ENCODE measurements at regions of chr4 and their contacts with region 1.

Region 1: GRCh38 chr4:151362404-151363164 is 37.2 kb upstream of the SH3D19 start:
- DNase-seq: peak; percentile 84 to 92
- H3K4me3 ChIP-seq: no peak overlapping the region
- H3K4me1 ChIP-seq: no peaks in the 10 kb centered on the region
- H3K27me3 ChIP-seq: no peaks in the 10 kb centered on the region

Region 2: DNA sequence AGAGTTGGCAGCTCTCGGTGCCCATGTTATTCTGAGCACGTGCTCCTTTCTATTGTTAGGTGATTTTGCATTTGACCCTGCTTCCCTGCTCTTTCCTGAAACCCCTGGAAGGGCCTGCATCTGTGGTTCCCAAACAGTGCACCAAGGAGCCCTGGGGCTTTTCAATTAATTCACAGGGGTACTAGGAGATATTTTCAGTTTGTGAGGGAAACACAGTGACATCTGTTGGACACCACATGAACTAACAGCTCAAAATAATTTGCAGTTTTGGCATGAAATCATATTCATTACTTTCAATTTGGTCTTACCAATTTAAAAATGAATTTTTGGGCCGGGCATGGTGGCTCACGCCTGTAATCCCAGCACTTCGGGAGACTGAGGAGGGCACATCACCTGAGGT is 241.7 kb after region 1 on chr4:
- in situ Hi-C with region 1: loop called (anchors 25 kb)
- DNase-seq: peak in 1 of 2 experiments; percentile 32
- H3K4me3 ChIP-seq: no peak overlapping the region
- H3K4me1 ChIP-seq: no peaks in the 10 kb centered on the region
- H3K27me3 ChIP-seq: no peaks in the 10 kb centered on the region